CD4-positive, alpha-beta T cell (primary cell): ENCODE measurements at regions of chr3 and their contacts with region 1.

Region 1: GRCh38 chr3:133573054-133573628 is 345 bp upstream of the CDV3 start:
- DNase-seq: peak; percentile 99 to 100 (median 100)
- ATAC-seq: peak; percentile 84
- H3K4me3 ChIP-seq: peak overlapping the region; percentile 79
- H3K4me3 Mint-ChIP-seq: peak overlapping the region; percentile 89
- H3K27ac ChIP-seq: peak overlapping the region; percentile 88 to 98
- H3K27ac Mint-ChIP-seq: peak overlapping the region; percentile 99
- H3K4me1 ChIP-seq: peaks cover 39% of the 10 kb centered on the region
- H3K4me1 Mint-ChIP-seq: peaks cover 64% of the 10 kb centered on the region
- H3K27me3 ChIP-seq: no peaks in the 10 kb centered on the region
- H3K27me3 Mint-ChIP-seq: no peaks in the 10 kb centered on the region
- CTCF ChIP-seq: no peak

Region 2: GRCh38 chr3:132416807-132417694 is 1156.1 kb before region 1 on chr3 and contains the start of gene DNAJC13:
- CTCF ChIA-PET with region 1: interaction called, 3 read pairs
- POLR2A ChIA-PET with region 1: interaction called, 10 read pairs
- intact Hi-C with region 1: loop called in 1 of 2 experiments (anchors 2 kb)
- DNase-seq: peak; percentile 81 to 98 (median 89)
- ATAC-seq: peak; percentile 93
- H3K4me3 ChIP-seq: peak within 1 kb of the TSS; percentile 91
- H3K4me3 Mint-ChIP-seq: peak within 1 kb of the TSS; percentile 97
- H3K27ac ChIP-seq: peak within 1 kb of the TSS; percentile 76 to 81
- H3K27ac Mint-ChIP-seq: peak within 1 kb of the TSS; percentile 91
- H3K4me1 ChIP-seq: peaks cover 12% of the 10 kb centered on the region
- H3K4me1 Mint-ChIP-seq: peaks cover 34% of the 10 kb centered on the region
- H3K27me3 ChIP-seq: no peaks in the 10 kb centered on the region
- H3K27me3 Mint-ChIP-seq: no peaks in the 10 kb centered on the region
- CTCF ChIP-seq: no peak
- total RNA-seq, gene DNAJC13: 13.5 to 14.3 TPM

Region 3: DNA sequence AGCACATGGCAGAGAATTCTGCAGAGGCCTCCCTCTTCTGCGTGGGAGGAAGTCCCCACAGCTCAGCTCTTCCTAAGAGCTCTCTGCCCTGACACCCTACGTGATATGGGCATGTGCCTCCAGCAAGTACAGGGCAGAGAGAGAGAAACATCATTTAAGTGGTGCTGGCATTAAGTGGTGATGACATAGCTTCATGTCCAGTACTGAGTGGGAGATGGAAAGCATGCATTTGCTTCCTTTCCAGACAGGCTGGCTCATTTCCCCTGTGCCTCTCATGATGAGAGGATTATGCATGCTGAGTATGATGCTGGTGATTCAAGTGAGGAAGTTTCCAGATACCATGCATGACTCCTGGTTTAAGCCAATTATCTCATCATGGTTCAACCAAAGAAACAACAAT is 146.4 kb before region 1 on chr3:
- CTCF ChIA-PET with region 1: no interaction called
- POLR2A ChIA-PET with region 1: interaction called, 4 read pairs
- intact Hi-C with region 1: loop called in 1 of 2 experiments (anchors 5 kb)
- DNase-seq: no peak
- ATAC-seq: no peak
- H3K4me3 ChIP-seq: no peak overlapping the region
- H3K4me3 Mint-ChIP-seq: no peak overlapping the region
- H3K27ac ChIP-seq: no peak overlapping the region
- H3K27ac Mint-ChIP-seq: no peak overlapping the region
- H3K4me1 ChIP-seq: peaks cover 6% of the 10 kb centered on the region
- H3K4me1 Mint-ChIP-seq: no peaks in the 10 kb centered on the region
- H3K27me3 ChIP-seq: no peaks in the 10 kb centered on the region
- H3K27me3 Mint-ChIP-seq: peaks cover 9% of the 10 kb centered on the region
- CTCF ChIP-seq: no peak

Region 4: DNA sequence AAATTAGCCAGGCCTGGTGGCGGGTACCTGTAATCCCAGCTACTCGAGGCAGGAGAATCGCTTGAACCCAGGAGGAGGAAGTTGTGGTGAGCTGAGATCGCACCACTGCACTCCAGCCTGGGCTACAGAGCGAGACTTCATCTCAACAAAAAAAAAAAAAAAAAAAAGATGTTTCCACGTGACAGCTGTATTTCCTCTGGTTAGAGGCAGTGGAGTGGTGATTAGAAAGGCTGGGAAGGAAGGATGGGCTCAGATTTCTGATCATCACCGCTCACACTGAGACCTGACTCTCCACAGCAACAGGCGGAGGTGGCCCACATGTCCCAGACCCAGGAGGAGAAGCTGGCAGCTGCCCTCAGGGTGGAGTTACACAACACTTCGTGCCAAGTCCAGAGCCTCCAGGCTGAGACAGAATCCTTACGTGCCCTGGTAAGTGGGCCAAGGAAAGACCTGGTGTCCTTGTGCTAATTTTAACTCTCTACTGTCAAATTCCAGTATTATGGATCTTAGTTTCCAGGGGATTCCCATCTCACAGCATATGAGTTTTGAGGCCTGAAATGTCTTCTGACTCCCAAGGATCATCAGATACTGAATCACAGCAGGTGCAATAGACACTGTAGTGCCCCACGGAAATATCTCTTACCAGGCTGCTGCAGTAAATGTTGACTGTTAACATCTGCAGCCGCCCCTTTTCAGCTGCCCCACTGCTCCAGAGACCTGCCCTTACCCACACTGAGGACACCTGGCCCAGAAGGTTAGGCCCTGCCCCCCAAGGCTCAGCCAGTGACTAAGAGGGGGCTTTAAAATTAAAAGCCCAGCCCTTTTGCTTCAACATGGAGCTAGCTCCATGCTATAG is 106.4 kb before region 1 on chr3:
- CTCF ChIA-PET with region 1: no interaction called
- POLR2A ChIA-PET with region 1: interaction called, 15 read pairs
- intact Hi-C with region 1: no loop called
- DNase-seq: peak in 2 of 14 experiments; percentile 12 to 18
- ATAC-seq: peak; percentile 44
- H3K4me3 ChIP-seq: no peak overlapping the region
- H3K4me3 Mint-ChIP-seq: no peak overlapping the region
- H3K27ac ChIP-seq: no peak overlapping the region
- H3K27ac Mint-ChIP-seq: no peak overlapping the region
- H3K4me1 ChIP-seq: peaks cover 15% of the 10 kb centered on the region
- H3K4me1 Mint-ChIP-seq: peaks cover 47% of the 10 kb centered on the region
- H3K27me3 ChIP-seq: no peaks in the 10 kb centered on the region
- H3K27me3 Mint-ChIP-seq: no peaks in the 10 kb centered on the region
- CTCF ChIP-seq: no peak

Region 5: GRCh38 chr3:133588784-133589465 is 15.8 kb after region 1 on chr3:
- CTCF ChIA-PET with region 1: no interaction called
- POLR2A ChIA-PET with region 1: interaction called, 7 read pairs
- intact Hi-C with region 1: loop called in 1 of 2 experiments (anchors 2 kb)
- DNase-seq: no peak
- ATAC-seq: no peak
- H3K4me3 ChIP-seq: no peak overlapping the region
- H3K4me3 Mint-ChIP-seq: no peak overlapping the region
- H3K27ac ChIP-seq: no peak overlapping the region
- H3K27ac Mint-ChIP-seq: no peak overlapping the region
- H3K4me1 ChIP-seq: no peaks in the 10 kb centered on the region
- H3K4me1 Mint-ChIP-seq: peaks cover 8% of the 10 kb centered on the region
- H3K27me3 ChIP-seq: no peaks in the 10 kb centered on the region
- H3K27me3 Mint-ChIP-seq: no peaks in the 10 kb centered on the region
- CTCF ChIP-seq: no peak

Region 6: DNA sequence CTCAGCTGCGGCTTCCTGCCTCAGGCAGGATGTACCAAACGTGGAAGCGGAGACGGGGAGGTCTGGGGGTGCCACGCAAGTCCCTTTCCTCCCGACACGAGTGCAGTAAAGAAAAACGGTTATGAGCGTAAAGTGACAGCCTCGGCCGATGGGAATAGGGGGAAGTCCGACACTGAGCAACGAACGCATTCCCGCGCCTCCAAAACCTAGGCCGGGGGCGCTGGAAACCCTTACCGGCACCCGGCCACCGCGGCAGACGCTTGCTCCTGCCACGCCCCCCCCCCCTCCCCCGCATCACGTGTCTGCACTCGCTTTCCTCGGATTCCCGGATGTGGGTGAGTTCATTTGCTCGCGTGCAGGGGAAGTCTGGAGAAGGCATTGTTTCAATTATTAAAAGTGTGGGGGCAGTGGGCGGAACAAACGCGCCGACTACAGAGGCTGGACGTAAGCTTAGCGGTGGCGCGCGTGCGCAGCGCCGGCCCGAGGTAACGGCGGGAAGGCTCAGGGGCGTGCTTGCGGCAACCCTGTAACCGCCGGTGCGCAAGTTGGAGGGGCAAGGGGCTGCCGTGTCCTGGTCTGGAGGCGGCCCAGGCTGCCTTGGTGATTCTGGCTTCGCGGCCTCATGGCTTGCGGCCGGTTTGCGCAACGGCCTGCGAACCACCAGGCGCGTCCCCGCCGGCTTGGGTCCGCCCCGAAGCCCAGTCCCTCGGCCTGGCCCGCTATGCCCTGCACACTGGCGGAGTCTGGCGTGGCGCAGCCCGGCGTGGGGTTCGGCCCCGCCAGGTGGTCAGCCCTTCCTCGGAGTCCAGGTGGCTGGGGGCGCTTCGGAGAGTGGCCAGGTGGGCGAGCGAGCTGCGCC is 912.8 kb after region 1 on chr3 and contains the starts of genes ANAPC13 and CEP63:
- CTCF ChIA-PET with region 1: no interaction called
- POLR2A ChIA-PET with region 1: interaction called, 23 read pairs
- intact Hi-C with region 1: loop called (anchors 5 kb)
- DNase-seq: peak; percentile 84 to 99 (median 90)
- ATAC-seq: peak; percentile 76
- H3K4me3 ChIP-seq: peak within 1 kb of the TSS; percentile 96
- H3K4me3 Mint-ChIP-seq: peak within 1 kb of the TSS; percentile 100
- H3K27ac ChIP-seq: peak within 1 kb of the TSS; percentile 86 to 95
- H3K27ac Mint-ChIP-seq: peak within 1 kb of the TSS; percentile 98
- H3K4me1 ChIP-seq: peaks cover 29% of the 10 kb centered on the region
- H3K4me1 Mint-ChIP-seq: peaks cover 71% of the 10 kb centered on the region
- H3K27me3 ChIP-seq: no peaks in the 10 kb centered on the region
- H3K27me3 Mint-ChIP-seq: no peaks in the 10 kb centered on the region
- CTCF ChIP-seq: no peak
- total RNA-seq, gene ANAPC13: 12.9 to 16.8 TPM
- total RNA-seq, gene CEP63: 13.2 to 15.1 TPM